PC-9 (cell line): ENCODE measurements at regions of chr6 and their contacts with region 1.

Region 1: DNA sequence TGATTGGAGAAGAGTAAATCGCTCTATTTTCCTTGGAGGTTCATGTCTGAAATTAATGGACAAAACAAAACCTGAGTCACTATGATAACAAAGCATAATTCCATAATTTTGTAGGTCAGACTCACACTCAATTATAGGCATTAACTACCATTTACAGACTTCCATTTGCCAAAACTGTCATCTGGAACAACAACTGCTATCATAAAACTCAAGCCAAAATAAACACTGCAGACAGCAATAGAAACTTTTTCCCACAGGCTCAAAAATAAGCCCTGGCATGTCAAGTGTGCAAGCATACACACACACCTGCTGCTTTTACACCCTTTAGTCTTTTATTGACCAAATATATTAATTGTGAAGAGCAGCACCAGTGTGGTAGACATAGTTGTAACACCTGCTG is 7.1 kb downstream of the MRPS10 start:
- DNase-seq: no peak
- H3K4me3 ChIP-seq: no peak overlapping the region
- H3K27ac ChIP-seq: no peak overlapping the region
- H3K4me1 ChIP-seq: peaks cover 13% of the 10 kb centered on the region
- H3K27me3 ChIP-seq: no peaks in the 10 kb centered on the region
- CTCF ChIP-seq: no peak

Region 2: DNA sequence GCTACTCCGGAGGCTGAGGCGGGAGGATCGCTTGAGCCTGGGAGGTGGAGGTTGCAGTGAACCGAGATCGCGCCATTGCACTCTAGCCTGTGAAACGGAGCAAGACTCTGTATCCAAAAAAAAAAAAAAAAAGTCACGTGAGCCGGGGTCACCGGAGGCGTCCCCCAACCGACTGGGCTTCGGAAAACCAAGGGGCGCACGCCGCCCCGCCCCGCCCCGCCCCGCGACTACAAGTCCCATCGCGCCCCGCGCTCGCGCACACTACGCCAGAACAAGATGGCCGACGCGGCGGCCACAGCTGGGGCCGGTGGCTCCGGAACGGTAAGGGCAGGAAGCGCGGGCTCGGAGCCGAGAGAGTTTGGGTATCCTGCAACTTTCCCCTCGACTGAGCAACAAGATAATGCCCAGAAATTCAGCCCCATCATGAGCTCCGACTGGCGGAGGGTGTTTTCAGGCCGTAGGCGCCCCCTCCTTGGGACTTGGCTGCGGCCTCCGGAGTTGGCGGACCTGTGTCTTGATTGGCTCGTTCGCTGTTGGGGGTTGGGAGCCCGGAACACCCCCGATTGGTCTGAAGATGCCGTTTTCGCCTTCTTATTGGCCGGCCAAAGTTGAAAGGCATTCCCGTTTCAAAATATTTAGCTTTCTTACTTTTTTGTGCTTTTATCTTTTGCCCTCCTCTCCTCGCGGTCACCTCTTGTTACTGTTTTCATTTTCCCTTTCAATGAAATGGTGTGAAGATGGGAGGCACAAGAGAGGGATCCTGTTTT is 160.1 kb before region 1 on chr6 and contains the start of gene TAF8:
- CTCF ChIA-PET with region 1: interaction called, 10 read pairs
- POLR2A ChIA-PET with region 1: interaction called, 4 read pairs
- intact Hi-C with region 1: loop called (anchors 5 kb)
- DNase-seq: peak; percentile 83 to 90
- H3K4me3 ChIP-seq: peak within 1 kb of the TSS; percentile 91
- H3K27ac ChIP-seq: peak within 1 kb of the TSS; percentile 68
- H3K4me1 ChIP-seq: peaks cover 36% of the 10 kb centered on the region
- H3K27me3 ChIP-seq: no peaks in the 10 kb centered on the region
- CTCF ChIP-seq: no peak
- total RNA-seq, gene TAF8: 35.6 and 38.4 TPM in 2 replicates

Region 3: GRCh38 chr6:42059743-42060142 is 150.8 kb before region 1 on chr6:
- CTCF ChIA-PET with region 1: no interaction called
- POLR2A ChIA-PET with region 1: no interaction called
- intact Hi-C with region 1: loop called (anchors 5 kb)
- DNase-seq: no peak
- H3K4me3 ChIP-seq: no peak overlapping the region
- H3K27ac ChIP-seq: no peak overlapping the region
- H3K4me1 ChIP-seq: no peaks in the 10 kb centered on the region
- H3K27me3 ChIP-seq: no peaks in the 10 kb centered on the region
- CTCF ChIP-seq: no peak

Region 4: GRCh38 chr6:42338663-42339218 is 128.2 kb after region 1 on chr6:
- CTCF ChIA-PET with region 1: no interaction called
- POLR2A ChIA-PET with region 1: no interaction called
- intact Hi-C with region 1: no loop called
- DNase-seq: peak; percentile 70 to 97
- H3K4me3 ChIP-seq: peak overlapping the region; percentile 15; the same call in 1 of the 2 replicates
- H3K27ac ChIP-seq: peak overlapping the region; percentile 93
- H3K4me1 ChIP-seq: peaks cover 39% of the 10 kb centered on the region
- H3K27me3 ChIP-seq: no peaks in the 10 kb centered on the region
- CTCF ChIP-seq: no peak

Region 5: DNA sequence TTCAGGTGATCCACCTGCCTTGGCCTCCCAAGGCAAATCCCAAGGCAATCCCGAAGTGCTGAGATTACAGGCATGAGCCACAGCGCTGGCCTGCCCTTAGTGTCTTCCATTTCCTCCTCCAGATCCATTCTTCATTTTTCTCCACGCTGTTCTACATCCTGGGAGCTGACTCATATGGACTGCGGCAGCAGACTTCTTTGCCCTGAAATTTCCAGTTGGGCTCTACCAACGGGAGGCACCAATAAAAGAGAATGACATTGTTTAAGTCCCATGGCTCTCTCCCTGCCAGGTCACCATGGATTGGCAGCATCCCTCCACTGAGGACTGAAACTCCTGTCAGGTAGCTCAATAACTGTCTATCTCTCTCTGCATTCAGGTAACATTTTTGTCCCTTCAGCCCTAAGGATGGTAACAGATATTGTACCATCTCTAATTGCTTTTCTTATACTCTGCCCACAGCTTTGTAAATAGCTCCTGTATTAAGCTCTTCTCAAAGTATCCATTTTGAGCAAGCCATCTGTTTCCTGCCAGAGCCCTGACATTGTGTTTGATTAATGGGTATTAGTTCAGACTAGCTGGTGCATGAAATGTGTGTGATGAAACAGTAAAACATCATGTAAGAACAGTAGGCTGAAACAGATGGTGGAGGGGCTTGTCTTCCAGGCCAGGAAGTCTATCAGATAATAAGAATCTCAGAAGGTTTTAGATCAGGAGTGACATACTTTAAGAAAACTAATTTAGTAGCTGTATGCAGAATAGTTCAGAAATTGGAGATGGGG is 531.8 kb after region 1 on chr6:
- CTCF ChIA-PET with region 1: no interaction called
- POLR2A ChIA-PET with region 1: no interaction called
- intact Hi-C with region 1: no loop called
- DNase-seq: no peak
- H3K4me3 ChIP-seq: no peak overlapping the region
- H3K27ac ChIP-seq: no peak overlapping the region
- H3K4me1 ChIP-seq: peaks cover 10% of the 10 kb centered on the region
- H3K27me3 ChIP-seq: no peaks in the 10 kb centered on the region
- CTCF ChIP-seq: no peak